Transverse colon (tissue), 4 donors: ENCODE measurements at regions of chr9 and their contacts with region 1.

Region 1: DNA sequence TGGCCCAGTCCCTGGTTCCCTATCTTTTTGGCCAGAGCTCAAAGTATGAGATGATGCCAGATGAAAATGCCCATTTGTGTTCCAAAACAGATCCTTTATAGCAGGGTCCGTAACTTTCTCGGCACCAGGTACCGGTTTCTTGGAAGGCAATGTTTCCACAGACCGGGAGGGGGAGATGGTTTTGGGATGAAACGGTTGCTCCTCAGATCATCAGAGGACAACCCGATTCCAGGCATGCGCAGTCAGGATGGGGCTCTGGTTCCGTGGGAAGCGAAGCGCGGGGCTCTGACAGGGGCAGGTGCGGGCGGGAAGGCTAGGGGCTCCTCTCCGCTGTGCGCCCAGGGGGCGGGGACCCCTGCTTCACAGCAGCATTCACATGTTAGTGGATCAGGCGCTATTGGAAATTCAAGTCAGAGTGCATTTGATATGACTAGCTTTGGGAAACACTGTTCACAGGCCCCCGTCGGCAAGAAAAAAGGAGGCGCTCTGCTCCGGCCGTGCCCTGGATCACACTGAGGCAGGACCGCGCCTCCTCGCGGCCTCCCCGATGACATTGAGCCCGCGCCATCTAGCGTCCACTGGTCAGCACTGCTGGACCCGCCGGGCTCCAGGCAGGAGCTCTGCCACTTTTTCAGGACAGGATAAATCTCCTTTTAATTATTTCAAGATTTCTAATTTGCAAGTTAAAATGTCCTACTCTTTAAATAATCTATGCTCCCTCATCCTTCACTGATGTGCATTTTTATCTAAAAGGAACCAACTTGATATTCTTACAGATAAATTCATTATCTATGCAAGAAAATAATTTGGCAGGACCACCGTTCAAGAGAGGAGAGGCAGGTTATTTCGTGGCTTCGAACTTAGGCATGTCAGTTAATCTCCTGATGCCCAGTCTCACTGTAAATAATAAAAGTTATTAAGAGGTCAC is 190.0 kb downstream of the FANCC start:
- DNase-seq: peak; percentile 87
- H3K4me3 ChIP-seq: peak overlapping the region in 2 of 4 donors; percentile 2 to 26
- H3K27ac ChIP-seq: peak overlapping the region in 1 of 4 donors; percentile 34
- H3K4me1 ChIP-seq: peaks cover 0 to 28% (median 5%) of the 10 kb centered on the region in 4 donors
- H3K27me3 ChIP-seq: no peaks in the 10 kb centered on the region
- CTCF ChIP-seq: peak; percentile 89 to 96 (median 96)
- EP300 ChIP-seq: no peak
- POLR2A ChIP-seq: no peak

Region 2: DNA sequence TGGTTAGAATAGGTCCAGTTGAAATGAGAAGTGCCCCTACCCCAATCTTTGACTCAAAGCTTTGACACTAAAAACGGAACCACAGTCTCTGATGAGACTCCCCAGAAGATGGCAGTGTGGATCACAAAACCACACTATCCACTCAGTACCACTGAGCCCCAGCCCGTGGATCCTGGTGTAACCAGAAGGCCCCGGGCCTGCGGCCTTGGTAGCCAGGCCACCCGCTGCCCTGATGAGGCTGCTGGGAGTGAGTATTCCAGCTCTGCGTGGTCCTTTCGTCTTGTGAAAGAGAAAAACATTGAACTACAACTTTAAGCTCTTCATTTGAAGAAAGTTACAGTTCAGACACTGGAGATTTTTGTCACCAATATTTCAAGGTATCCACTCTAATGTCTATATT is 446.0 kb before region 1 on chr9:
- in situ Hi-C with region 1: loop called (anchors 5 to 10 kb)
- intact Hi-C with region 1: loop called (anchors 5 kb)
- DNase-seq: peak; percentile 71
- H3K4me3 ChIP-seq: no peak overlapping the region
- H3K27ac ChIP-seq: peak overlapping the region in 1 of 4 donors; percentile 30
- H3K4me1 ChIP-seq: no peaks in the 10 kb centered on the region
- H3K27me3 ChIP-seq: no peaks in the 10 kb centered on the region
- CTCF ChIP-seq: peak; percentile 58 to 72 (median 67)
- EP300 ChIP-seq: no peak
- POLR2A ChIP-seq: no peak

Region 3: GRCh38 chr9:94783102-94783664 is 344.3 kb before region 1 on chr9:
- in situ Hi-C with region 1: loop called (anchors 10 to 25 kb)
- intact Hi-C with region 1: loop called (anchors 5 kb)
- DNase-seq: peak; percentile 76
- H3K4me3 ChIP-seq: no peak overlapping the region
- H3K27ac ChIP-seq: peak overlapping the region in 2 of 4 donors; percentile 14 to 23
- H3K4me1 ChIP-seq: peaks cover 0 to 7% (median 0%) of the 10 kb centered on the region in 4 donors
- H3K27me3 ChIP-seq: no peaks in the 10 kb centered on the region
- CTCF ChIP-seq: peak; percentile 59 to 76 (median 69)
- EP300 ChIP-seq: no peak
- POLR2A ChIP-seq: no peak